MCF 10A (cell line): ENCODE measurements at regions of chr10 and their contacts with region 1.

Region 1: DNA sequence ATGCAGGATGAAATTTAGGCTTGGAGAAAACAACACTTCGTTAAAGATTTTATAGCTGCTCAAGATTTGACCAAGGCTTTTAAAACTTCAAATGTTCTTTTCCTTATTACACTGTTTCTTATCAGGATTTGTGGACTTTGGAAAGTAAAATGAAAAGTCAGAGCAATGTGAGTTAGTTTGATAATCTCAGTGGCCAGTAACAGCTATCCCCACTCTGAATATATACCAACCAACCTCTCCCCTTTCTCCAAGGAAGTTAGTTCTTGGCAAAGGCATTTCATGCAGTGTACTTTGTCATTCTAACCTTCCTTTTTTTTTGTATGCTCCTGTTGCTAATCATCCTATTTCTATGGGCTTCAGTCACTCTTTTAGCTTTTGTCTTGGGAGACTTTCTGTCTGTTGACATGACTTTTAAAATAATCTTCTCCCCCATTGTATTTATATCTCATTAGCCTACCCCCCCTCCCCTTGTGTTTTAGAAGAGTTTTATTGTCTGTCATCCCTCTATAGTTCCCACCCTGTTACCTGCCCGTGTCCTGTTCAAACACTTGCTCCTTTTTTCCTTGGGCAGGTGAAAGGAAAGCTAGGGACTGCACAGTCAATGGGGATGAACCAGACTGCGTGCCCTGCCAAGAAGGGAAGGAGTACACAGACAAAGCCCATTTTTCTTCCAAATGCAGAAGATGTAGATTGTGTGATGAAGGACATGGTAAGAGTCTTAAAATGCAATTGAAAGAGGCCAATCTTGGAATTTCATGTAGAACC is 16.7 kb downstream of the FAS start:
- DNase-seq: no peak
- H3K4me3 Mint-ChIP-seq: no peak overlapping the region
- H3K27ac Mint-ChIP-seq: peak overlapping the region; percentile 32
- H3K4me1 Mint-ChIP-seq: no peaks in the 10 kb centered on the region
- H3K27me3 Mint-ChIP-seq: no peaks in the 10 kb centered on the region
- CTCF ChIP-seq: no peak

Region 2: DNA sequence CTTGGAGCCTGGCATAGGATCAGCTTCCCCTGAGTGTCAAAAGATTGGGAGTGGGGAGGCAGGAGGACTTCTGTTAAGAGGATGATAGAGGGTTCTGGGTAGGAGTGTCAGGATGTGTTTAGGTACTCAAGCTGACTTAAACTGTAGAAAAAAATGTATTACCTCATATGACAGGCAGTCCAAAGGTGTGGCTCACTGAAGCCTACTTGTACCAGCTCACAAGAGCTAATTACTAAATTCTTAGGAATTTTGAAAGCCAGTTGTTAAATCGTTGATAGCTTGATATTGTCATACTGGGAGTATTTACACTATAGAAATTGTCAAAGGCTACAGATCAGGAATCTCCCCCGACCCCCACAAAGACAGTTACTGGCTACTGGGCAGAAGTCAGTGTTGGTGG is 15.4 kb after region 1 on chr10:
- CTCF ChIA-PET with region 1: interaction called, 3 read pairs
- POLR2A ChIA-PET with region 1: interaction called, 17 read pairs
- intact Hi-C with region 1: no loop called
- DNase-seq: no peak
- H3K4me3 Mint-ChIP-seq: no peak overlapping the region
- H3K27ac Mint-ChIP-seq: no peak overlapping the region
- H3K4me1 Mint-ChIP-seq: peaks cover 24% of the 10 kb centered on the region
- H3K27me3 Mint-ChIP-seq: no peaks in the 10 kb centered on the region
- CTCF ChIP-seq: no peak

Region 3: GRCh38 chr10:89129911-89130310 is 122.6 kb after region 1 on chr10:
- CTCF ChIA-PET with region 1: no interaction called
- POLR2A ChIA-PET with region 1: no interaction called
- intact Hi-C with region 1: no loop called
- DNase-seq: peak; percentile 89
- H3K4me3 Mint-ChIP-seq: peak overlapping the region; percentile 44
- H3K27ac Mint-ChIP-seq: peak overlapping the region; percentile 29
- H3K4me1 Mint-ChIP-seq: peaks cover 12% of the 10 kb centered on the region
- H3K27me3 Mint-ChIP-seq: no peaks in the 10 kb centered on the region
- CTCF ChIP-seq: no peak

Region 4: DNA sequence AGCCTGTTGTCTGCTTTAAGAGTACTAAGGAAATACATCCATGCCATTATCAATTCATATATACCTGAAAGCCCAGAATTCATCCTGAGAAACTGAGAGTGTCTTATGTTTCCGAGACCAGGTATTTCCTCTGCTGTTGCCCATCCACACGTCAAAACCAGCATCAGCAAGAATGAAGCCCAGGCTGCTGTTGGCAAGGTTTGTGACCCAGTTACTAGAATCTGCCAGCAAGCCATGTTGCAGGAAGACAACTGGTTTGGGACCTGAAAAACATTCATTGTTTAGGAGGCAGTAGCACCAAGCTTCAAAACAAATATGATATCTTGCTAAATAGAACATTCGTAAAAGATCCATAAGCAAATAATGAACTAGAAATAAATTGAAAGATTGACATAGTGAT is 220.8 kb after region 1 on chr10:
- CTCF ChIA-PET with region 1: no interaction called
- POLR2A ChIA-PET with region 1: no interaction called
- intact Hi-C with region 1: no loop called
- DNase-seq: no peak
- H3K4me3 Mint-ChIP-seq: no peak overlapping the region
- H3K27ac Mint-ChIP-seq: no peak overlapping the region
- H3K4me1 Mint-ChIP-seq: no peaks in the 10 kb centered on the region
- H3K27me3 Mint-ChIP-seq: no peaks in the 10 kb centered on the region
- CTCF ChIP-seq: no peak